ENCODE measurements at regions of chr16 and their contacts with region 1.

Region 1: GRCh38 chr16:56700195-56700594 is 17.9 kb downstream of the MT1X start:
- DNase-seq: no peak
- ATAC-seq: no peak
- H3K4me3 Mint-ChIP-seq: no peak overlapping the region
- H3K27ac Mint-ChIP-seq: no peak overlapping the region
- H3K4me1 Mint-ChIP-seq: peaks cover 11% of the 10 kb centered on the region
- H3K27me3 Mint-ChIP-seq: no peaks in the 10 kb centered on the region

Region 2: GRCh38 chr16:56513972-56514371 is 186.2 kb before region 1 on chr16:
- CTCF ChIA-PET with region 1: interaction called, 16 read pairs
- POLR2A ChIA-PET with region 1: no interaction called
- DNase-seq: peak; percentile 68
- ATAC-seq: peak; percentile 83
- H3K4me3 Mint-ChIP-seq: no peak overlapping the region
- H3K27ac Mint-ChIP-seq: no peak overlapping the region
- H3K4me1 Mint-ChIP-seq: peaks cover 3% of the 10 kb centered on the region
- H3K27me3 Mint-ChIP-seq: peaks cover 2% of the 10 kb centered on the region

Region 3: DNA sequence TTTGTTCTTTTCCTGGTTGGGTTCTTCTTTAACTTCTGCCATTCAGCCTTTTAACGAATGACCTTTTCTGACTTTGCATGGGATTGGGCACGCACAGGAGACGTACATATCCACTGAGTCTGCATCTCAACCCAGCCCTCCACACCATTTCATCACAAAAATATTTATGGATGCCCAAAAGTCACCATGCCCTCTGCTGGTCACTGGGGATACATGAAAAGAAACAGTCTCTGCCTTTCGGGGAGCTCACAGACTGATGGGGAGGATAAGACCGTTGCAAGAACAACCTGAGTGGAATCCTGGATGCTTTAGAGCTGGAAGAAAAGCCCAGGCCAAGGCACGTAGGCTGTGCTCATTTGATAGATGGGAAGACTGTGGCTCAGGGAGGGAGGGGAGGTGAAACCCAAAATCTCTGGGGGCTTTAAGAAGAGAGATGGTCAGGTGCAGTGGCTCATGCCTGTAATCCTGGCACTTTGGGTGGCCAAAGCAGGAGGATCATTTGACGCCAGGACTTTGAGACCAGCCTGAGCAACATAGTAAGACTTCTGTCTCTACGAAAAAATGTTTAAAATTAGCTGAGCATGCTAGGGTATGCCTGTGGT is 99.7 kb before region 1 on chr16:
- CTCF ChIA-PET with region 1: interaction called, 23 read pairs
- POLR2A ChIA-PET with region 1: no interaction called
- DNase-seq: peak; percentile 60
- ATAC-seq: peak; percentile 72
- H3K4me3 Mint-ChIP-seq: no peak overlapping the region
- H3K27ac Mint-ChIP-seq: no peak overlapping the region
- H3K4me1 Mint-ChIP-seq: peaks cover 7% of the 10 kb centered on the region
- H3K27me3 Mint-ChIP-seq: peaks cover 16% of the 10 kb centered on the region

Region 4: DNA sequence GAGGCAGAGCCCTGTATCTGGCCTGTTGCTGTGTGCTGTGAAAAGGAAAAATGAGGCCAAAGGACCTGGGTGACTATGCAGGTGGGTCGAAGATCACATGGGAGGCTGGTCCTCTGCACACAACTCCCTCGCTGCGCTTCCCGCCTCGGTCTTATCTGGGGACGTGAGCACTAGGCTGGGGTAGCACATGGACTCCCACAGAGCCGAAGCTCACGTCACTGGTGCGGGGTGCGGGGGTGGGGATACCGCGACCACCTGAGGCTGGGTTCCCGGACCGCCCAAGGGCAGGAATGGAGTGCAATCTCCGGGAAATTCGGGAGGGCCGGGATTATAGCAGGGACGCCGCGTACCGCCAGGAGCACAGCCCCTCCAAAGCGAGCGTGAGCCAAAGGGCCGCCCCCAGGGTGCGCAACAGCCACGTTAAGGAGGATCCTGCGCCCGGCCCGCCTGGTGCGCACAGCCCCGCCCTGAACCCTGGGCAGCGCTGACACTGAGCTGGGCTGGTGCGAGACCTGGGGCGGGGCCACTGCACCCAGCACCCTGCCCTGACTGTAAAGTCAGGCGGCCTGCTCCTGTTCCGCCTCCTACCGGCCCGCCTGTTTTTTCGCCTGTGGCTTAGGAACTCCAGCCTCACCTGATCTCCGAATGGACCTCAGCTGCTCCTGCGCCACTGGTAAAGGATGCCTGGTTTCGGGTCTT is 57.0 kb before region 1 on chr16:
- CTCF ChIA-PET with region 1: interaction called, 34 read pairs
- POLR2A ChIA-PET with region 1: no interaction called
- DNase-seq: peak; percentile 87
- ATAC-seq: peak; percentile 100
- H3K4me3 Mint-ChIP-seq: peak overlapping the region; percentile 66
- H3K27ac Mint-ChIP-seq: no peak overlapping the region
- H3K4me1 Mint-ChIP-seq: peaks cover 28% of the 10 kb centered on the region
- H3K27me3 Mint-ChIP-seq: peaks cover 69% of the 10 kb centered on the region

Region 5: GRCh38 chr16:56681939-56682702 is 18.1 kb before region 1 on chr16 and contains the start of gene MT1X:
- CTCF ChIA-PET with region 1: interaction called, 35 read pairs
- POLR2A ChIA-PET with region 1: interaction called, 24 read pairs
- DNase-seq: peak; percentile 94
- ATAC-seq: peak; percentile 97
- H3K4me3 Mint-ChIP-seq: peak within 1 kb of the TSS; percentile 96
- H3K27ac Mint-ChIP-seq: peak within 1 kb of the TSS; percentile 98
- H3K4me1 Mint-ChIP-seq: peaks cover 34% of the 10 kb centered on the region
- H3K27me3 Mint-ChIP-seq: no peaks in the 10 kb centered on the region
- total RNA-seq, gene MT1X: 85.3 to 86.0 TPM

Region 6: DNA sequence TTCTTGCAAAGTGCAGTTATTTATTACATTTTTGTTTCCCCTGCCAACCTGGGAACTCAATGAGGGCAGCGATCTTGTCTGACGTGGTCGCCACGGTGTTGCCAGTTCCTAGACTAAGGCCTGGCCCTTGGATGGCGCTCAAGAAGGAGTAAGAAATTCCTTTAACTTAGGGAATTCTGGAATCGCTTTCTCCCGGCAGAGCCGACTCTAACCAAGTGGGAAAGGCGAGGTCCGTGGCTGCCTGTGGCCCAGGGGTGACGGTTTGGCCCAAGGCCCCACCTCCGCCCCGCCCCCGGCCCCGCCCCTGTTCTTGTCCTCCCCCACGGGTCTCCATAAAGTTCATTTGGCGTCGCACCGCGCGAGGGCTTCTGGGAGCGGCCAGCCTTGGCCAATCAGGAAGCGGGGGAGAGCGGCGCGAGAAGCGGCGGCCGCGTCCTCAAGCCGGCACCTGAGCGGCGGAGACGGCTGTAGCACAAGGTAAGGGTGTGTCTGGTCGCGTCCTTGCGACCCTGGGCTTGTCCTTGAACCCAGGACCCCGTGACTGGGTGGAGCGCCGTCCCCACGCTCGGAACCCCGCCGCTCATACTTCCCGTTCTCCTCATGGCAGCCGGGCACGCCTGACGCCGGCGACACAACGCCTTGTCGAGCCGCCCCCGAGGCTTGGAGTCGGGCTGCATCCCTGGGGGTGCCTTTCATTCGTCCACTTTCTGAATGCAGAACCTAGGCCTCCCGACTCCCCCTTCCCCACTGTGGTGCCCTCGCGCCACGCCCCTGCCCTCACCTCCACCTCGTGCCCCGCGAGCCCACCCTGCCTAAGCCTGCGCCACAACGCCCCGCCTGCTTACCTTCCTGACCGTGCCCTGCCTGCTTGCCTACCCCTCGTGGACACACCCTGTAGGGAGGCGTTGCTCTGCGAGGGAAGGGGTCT is 29.8 kb after region 1 on chr16 and contains the start of gene NUP93:
- CTCF ChIA-PET with region 1: interaction called, 19 read pairs
- POLR2A ChIA-PET with region 1: no interaction called
- DNase-seq: peak; percentile 94
- ATAC-seq: peak; percentile 96
- H3K4me3 Mint-ChIP-seq: no peak within 1 kb of the TSS
- H3K27ac Mint-ChIP-seq: peak within 1 kb of the TSS; percentile 81
- H3K4me1 Mint-ChIP-seq: peaks cover 21% of the 10 kb centered on the region
- H3K27me3 Mint-ChIP-seq: no peaks in the 10 kb centered on the region
- total RNA-seq, gene NUP93: 129 to 143 TPM

Region 7: DNA sequence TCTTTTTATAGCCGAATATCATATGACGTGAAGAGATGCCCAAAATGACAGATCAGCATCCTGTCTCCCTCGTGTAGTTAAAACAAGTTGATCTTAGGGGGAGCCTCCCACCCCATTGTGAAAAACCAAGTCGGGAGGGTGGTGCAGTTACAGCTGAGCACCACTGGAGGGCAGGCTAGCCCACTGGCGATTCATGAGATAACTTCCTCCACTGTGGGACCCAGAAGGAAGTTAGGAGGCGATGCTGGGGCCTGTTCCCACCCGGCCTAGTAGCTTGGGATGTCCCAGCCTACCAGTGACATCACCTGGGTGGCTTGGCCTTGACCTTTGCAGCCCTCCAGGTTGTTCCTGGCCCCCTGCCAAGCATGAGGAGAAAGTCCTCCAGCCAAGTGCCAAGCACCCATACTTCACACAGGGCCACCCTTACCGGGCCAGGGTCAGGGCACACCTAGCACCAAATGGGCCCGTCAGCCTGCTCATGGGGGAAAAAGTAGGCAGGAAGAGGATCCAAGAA is 384.1 kb after region 1 on chr16:
- CTCF ChIA-PET with region 1: no interaction called
- POLR2A ChIA-PET with region 1: no interaction called
- DNase-seq: peak; percentile 87
- ATAC-seq: peak; percentile 75
- H3K4me3 Mint-ChIP-seq: no peak overlapping the region
- H3K27ac Mint-ChIP-seq: peak overlapping the region; percentile 74
- H3K4me1 Mint-ChIP-seq: peaks cover 8% of the 10 kb centered on the region
- H3K27me3 Mint-ChIP-seq: peaks cover 5% of the 10 kb centered on the region

Measured in activated CD8-positive, alpha-beta T cell treated with anti-CD3 and anti-CD28 coated beads, Interleukin-2, amount 10 ng/mL, durations not matched to agents 7 days and 5 days (primary cell).